Posterior cingulate gyrus (tissue), 11 donors: ENCODE measurements at regions of chr19 and their contacts with region 1.

Region 1: GRCh38 chr19:20999731-21000352 is 20.6 kb upstream of the ZNF430 start:
- DNase-seq: peak; percentile 83 to 98 (median 90)

Region 2: GRCh38 chr19:21020298-21021227 is 20.7 kb after region 1 on chr19 and contains the start of gene ZNF430:
- intact Hi-C with region 1: loop called (anchors 2 kb)
- DNase-seq: peak; percentile 84 to 99 (median 94)